ENCODE measurements at regions of chr7 and their contacts with region 1.

Region 1: DNA sequence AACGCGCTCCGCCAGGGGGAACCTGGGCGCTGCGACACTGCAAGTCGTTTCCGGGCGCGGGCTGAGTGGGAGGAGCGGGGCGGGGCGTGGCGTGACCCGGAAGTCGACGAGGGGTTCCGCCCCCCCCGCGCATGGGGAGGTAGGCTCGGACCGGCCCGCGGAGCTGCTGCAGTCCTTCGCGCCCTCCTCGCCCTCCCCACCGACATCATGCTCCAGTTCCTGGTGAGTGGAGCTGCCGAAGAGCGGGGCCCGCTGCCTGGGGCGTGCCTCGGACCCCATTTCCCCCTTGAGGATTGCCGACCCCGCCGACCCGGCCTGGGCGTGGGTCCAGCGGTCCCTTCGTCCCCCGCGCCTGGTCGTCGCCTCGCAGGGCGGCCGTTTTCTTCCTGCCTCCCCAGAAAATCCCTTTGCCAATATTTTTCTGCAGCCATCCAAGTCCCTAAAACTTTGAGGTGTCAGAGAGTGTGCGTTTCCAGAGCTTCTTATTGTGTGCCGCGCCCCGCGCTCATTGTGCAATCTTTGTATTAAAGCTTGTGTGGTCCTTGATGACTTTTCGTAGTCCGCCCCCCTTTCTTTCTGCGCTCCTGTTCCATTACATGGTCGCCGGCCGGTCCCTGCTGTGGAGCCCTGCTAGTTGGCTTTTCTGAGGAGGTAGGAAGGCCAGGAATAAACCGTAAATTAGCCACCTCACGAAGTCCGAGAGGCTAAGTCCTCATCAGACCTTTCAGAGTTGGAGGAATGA is at the start of gene STMP1:
- DNase-seq: peak; percentile 90
- H3K4me3 ChIP-seq: peak within 1 kb of the TSS; percentile 83
- CTCF ChIP-seq: peak; percentile 74

Region 2: GRCh38 chr7:135620980-135621850 is 41.3 kb before region 1 on chr7:
- in situ Hi-C with region 1: loop called (anchors 5 kb)
- DNase-seq: peak; percentile 88
- H3K4me3 ChIP-seq: no peak overlapping the region
- CTCF ChIP-seq: peak; percentile 72

Region 3: DNA sequence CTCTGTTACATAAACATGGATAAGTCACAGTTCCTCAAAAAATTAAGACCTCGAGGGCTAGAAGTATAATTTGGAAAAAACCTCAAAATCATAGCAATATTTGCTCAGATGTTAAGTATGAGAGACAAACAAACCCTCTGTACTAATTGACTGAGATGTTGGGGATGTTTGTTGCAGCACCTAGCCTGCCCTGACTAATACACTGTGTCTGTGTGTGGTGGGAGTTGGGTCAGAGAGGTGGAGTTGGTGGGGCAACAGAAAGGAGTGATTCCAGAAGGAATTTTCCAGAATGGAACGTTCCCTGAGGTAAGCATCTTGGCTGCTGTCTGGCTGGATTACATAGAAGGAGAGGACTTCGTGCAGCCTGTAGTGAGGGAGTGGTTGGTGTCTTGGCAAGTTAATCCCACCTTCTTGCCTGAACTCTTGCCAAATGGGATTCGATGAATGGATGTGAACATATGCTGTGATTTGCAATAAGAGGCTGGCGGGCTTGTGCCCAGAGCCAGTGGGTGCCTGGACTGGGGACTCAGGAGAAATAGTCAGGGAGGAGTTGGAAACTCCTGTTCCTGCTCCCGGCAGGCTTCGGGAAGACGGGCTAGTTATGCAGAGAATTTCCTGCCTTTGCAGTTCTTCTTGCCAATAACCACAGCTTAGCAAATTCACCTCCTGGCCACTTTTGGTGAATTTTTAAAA is 95.3 kb after region 1 on chr7:
- in situ Hi-C with region 1: no loop called
- DNase-seq: peak; percentile 80
- H3K4me3 ChIP-seq: no peak overlapping the region
- CTCF ChIP-seq: no peak

Region 4: GRCh38 chr7:136492366-136492765 is 829.8 kb after region 1 on chr7:
- in situ Hi-C with region 1: no loop called
- DNase-seq: no peak
- H3K4me3 ChIP-seq: no peak overlapping the region
- CTCF ChIP-seq: no peak

Measured in astrocyte of the cerebellum (primary cell).